HEK293 (cell line): ENCODE measurements at regions of chr22 and their contacts with region 1.

Region 1: DNA sequence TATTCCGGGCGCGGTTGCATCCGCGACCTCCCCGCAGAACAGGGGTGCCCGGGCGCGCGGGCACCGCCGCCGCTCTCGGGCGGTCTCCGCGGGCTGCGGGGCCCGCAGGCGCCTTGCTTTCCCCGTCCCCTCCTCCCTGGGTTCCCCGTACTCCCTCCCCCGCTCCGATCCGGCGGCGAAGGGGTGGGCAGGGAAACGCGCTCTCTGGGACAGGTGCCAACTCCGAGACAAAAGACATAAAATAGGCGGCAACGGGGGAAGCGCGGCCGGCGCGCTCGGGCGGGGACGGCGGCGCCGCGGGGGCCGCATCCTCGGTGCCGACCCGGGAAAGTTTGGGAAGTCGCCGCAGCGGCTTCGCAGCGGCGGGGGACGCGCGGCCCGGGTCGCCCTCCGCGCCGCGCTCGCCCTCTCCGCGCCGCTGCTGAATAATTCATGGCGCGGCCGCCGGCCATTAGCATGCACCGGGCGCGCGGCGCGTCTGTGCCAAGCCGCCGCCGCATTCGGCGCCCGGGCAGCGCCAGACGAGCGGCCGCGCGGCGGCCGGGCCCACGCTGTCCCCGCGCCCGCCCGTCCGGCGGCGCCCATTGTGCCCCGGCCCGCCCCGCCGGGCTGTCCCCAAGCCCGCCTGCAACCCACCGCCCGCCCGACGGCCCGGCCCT is 78.7 kb upstream of the PPARA start:
- H3K4me3 ChIP-seq: peak overlapping the region; percentile 99
- H3K27ac ChIP-seq: peak overlapping the region; percentile 100
- H3K4me1 ChIP-seq: peaks cover 25% of the 10 kb centered on the region
- CTCF ChIP-seq: no peak

Region 2: DNA sequence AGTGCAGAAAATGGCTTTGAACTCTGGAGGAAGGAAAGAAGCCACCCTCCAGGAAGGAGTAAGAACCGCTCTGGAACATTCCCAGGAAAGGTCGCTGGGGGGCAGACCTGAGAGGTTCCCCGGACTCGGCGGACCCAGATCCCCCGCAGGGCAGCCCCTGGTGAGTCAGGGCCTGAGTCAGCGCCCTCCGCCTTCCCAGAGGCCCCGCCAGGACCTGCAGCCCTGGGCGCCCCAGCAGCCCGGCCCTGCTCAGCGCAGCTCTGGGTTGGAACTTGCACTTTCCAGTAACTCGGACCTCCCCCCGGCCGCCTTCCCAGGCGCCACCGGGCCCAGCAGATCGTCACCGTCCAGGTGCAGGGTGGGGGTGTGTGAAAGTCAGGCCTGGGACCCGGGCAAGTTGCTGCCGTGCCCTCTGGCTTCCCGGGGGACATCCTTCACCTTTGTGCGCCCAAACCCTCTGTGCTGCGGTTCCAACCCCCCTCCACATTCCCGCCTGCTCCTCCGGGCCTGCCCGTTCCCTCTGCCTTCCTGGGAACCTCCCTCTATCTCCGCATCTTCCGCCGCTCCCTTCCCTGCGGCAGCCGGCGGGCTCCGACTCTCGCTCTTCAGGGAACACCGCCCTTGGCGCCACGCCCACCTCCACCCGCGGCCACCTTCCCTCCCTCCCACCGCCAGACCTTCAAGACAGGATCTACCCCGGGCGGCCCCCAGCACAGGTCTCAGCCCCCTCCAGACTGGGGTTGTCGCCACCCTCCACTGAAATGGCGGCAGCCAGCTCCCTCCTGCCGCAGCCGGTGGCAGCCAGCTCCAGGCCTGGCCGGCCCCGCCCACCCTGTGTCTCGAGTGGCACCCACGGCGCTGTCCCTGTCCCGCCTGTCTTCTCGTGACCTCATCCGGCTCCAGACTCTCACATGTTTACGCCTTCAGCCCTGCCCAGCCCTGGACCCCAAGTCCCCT is 57.8 kb before region 1 on chr22:
- CTCF ChIA-PET with region 1: interaction called, 14 read pairs
- POLR2A ChIA-PET with region 1: interaction called, 31 read pairs
- H3K4me3 ChIP-seq: peak overlapping the region; percentile 67
- H3K27ac ChIP-seq: peak overlapping the region; percentile 88
- H3K4me1 ChIP-seq: peaks cover 5% of the 10 kb centered on the region; the same call in 1 of the 2 replicates
- CTCF ChIP-seq: peak; percentile 88

Region 3: GRCh38 chr22:46057762-46058420 is 13.7 kb before region 1 on chr22:
- CTCF ChIA-PET with region 1: interaction called, 3 read pairs
- POLR2A ChIA-PET with region 1: interaction called, 42 read pairs
- H3K4me3 ChIP-seq: no peak overlapping the region
- H3K27ac ChIP-seq: no peak overlapping the region
- H3K4me1 ChIP-seq: peaks cover 11% of the 10 kb centered on the region
- CTCF ChIP-seq: no peak

Region 4: GRCh38 chr22:46102752-46103151 is 31.2 kb after region 1 on chr22:
- CTCF ChIA-PET with region 1: no interaction called
- POLR2A ChIA-PET with region 1: no interaction called
- H3K4me3 ChIP-seq: no peak overlapping the region
- H3K27ac ChIP-seq: peak overlapping the region; percentile 31; the same call in 1 of the 2 replicates
- H3K4me1 ChIP-seq: no peaks in the 10 kb centered on the region
- CTCF ChIP-seq: no peak